ENCODE measurements at regions of chr2 and their contacts with region 1.

Region 1: DNA sequence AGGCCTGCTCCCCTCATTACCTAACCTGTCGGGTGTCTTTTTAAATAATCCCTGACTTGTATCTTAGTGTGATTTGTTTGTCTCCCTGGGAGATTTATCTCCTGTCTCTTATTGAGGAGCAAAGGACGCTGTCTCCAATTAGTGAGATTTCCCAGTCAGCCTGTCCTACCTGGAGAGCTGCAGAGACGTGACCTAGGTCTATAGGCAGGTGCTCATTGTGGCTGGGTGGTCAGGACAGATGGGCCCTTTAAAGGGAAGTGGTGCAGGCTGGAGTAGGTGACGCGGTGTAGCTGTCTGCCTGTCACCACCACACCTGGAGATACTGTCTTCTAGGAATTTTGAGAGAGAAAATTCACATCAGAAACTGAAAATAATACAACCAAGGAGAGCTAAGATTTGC is 28.0 kb downstream of the PLB1 start:
- DNase-seq: no peak
- H3K4me3 ChIP-seq: no peak overlapping the region
- H3K27ac ChIP-seq: no peak overlapping the region
- H3K4me1 ChIP-seq: no peaks in the 10 kb centered on the region
- H3K27me3 ChIP-seq: peaks cover 18 to 36% of the 10 kb centered on the region in 2 experiments
- CTCF ChIP-seq: no peak
- POLR2A ChIP-seq: no peak

Region 2: DNA sequence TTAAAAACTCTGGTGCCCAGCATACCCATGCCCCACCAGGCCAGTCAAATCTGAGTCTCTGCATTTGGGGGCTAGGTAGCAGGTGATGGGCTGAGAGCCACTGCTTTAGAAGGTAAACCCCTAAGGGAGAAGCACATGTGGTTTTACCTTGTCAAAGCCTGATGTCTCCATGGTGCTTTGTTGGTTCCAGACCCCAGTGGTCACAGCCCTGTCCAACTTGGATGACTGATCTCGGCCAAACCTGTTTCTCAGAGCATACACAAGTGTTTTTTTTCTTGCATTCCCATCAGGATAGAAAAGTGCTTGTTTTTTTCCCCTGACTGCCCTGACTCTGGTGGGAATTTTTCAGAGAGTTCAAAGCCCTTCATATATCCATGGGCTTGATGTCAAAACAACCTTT is 14.5 kb before region 1 on chr2:
- CTCF ChIA-PET with region 1: no interaction called
- POLR2A ChIA-PET with region 1: interaction called, 14 read pairs
- dilution Hi-C with region 1: no loop called
- intact Hi-C with region 1: no loop called
- DNase-seq: no peak
- H3K4me3 ChIP-seq: no peak overlapping the region
- H3K27ac ChIP-seq: no peak overlapping the region
- H3K4me1 ChIP-seq: no peaks in the 10 kb centered on the region
- H3K27me3 ChIP-seq: peaks cover 18 to 37% of the 10 kb centered on the region in 2 experiments
- CTCF ChIP-seq: no peak
- POLR2A ChIP-seq: no peak